Common myeloid progenitor, CD34-positive (primary cell): ENCODE measurements at regions of chr5 and their contacts with region 1.

Region 1: DNA sequence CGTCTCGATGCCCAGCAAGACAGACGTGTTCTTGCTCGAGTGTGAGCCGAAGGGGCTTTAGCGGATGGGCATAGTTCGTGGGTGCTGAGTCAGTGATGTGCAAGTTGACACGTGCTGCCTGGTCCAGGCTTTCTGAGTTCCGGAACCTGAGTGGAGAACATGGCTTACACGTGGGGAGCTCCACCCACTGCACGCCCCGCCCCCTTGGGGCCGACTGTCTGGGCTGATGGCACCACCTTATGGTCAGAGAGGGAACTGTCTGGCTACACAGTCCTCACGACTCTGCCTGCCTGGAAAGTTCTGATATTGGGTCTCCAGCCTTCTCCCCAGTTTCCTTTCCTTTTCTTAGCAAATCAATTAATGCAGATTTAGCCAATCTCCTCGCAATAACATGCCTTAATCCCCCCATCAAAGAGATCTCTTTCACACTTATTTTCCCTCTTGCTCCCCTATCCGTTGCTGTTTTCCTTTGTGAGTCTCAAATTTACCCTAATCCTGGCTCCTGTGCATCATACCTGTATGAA is 3.8 kb upstream of the STC2 start:
- DNase-seq: peak; percentile 88 to 92 (median 91)
- H3K4me3 ChIP-seq: no peak overlapping the region
- H3K27ac ChIP-seq: no peak overlapping the region
- H3K4me1 ChIP-seq: peaks cover 0 to 31% (median 24%) of the 10 kb centered on the region in 4 experiments
- H3K27me3 ChIP-seq: peaks cover 0 to 78% (median 35%) of the 10 kb centered on the region in 5 experiments

Region 2: GRCh38 chr5:173320259-173320658 is 11.8 kb before region 1 on chr5:
- CTCF ChIA-PET with region 1: interaction called, 19 read pairs
- POLR2A ChIA-PET with region 1: no interaction called
- DNase-seq: peak in 1 of 3 donors; percentile 15
- H3K4me3 ChIP-seq: no peak overlapping the region
- H3K27ac ChIP-seq: no peak overlapping the region
- H3K4me1 ChIP-seq: peaks cover 0 to 20% (median 2%) of the 10 kb centered on the region in 4 experiments
- H3K27me3 ChIP-seq: peaks cover 0 to 88% (median 19%) of the 10 kb centered on the region in 5 experiments